Adrenal gland (tissue), 19 donors: ENCODE measurements at regions of chr11 and their contacts with region 1.

Region 1: DNA sequence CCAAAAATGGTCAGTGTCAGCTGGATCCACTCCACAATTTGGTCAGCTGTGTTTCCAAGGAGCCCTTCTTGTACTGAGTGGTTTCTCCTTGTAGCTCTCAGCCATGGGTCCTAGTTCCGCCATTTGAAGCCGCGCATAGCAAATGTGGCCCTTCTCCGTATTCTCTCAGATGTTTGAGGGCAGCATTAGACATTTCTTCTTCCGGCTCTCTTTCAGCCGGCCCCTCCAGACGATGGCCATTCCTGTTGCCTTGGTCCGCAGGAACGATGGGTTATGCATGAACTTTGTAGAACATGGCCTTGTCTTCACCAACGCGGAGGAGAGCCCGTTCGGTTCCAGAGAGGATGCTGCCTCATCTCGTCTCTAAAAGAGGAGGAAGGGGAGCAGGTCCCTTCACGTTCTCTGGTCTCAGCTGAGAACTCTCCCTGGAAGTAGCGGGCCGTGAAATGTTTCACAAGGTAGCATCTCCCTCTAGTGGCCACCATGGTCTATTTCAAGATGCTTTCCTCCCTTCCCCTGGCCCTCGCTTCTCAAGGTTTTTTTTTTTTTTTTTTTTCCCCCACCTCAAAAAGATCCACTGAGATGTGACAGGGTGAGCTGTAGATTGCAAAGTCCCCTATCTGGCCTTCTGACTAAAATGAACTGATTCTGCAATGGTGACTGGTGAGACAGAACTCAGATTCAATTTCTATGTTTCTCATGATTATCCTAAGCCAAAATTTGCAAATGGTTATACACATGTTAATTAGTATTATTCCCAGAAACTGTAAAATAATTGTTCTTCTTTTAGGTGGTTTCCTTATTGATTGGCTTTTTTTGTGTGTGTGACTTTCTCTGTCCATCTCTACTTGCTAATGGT is 19.8 kb upstream of the PLET1 start:
- DNase-seq: peak; percentile 74 to 88 (median 82)
- H3K4me3 ChIP-seq: peak overlapping the region in 2 of 4 donors; percentile 22 to 48
- H3K27ac ChIP-seq: peak overlapping the region in 1 of 5 donors; percentile 48
- H3K4me1 ChIP-seq: peaks cover 0 to 3% of the 10 kb centered on the region in 2 donors
- H3K27me3 ChIP-seq: no peaks in the 10 kb centered on the region
- CTCF ChIP-seq: peak; percentile 58 to 91 (median 82)
- POLR2A ChIP-seq: no peak

Region 2: GRCh38 chr11:111911563-111912401 is 368.7 kb before region 1 on chr11 and contains the start of gene CRYAB:
- intact Hi-C with region 1: no loop called
- DNase-seq: peak; percentile 82 to 94 (median 92)
- H3K4me3 ChIP-seq: peak within 1 kb of the TSS in 2 of 4 donors; percentile 13 to 53
- H3K27ac ChIP-seq: peak within 1 kb of the TSS; percentile 51 to 87 (median 61)
- H3K4me1 ChIP-seq: peaks cover 17 to 30% of the 10 kb centered on the region in 2 donors
- H3K27me3 ChIP-seq: no peaks in the 10 kb centered on the region
- CTCF ChIP-seq: no peak
- POLR2A ChIP-seq: peak; percentile 13 to 71
- total RNA-seq, gene CRYAB: 6.8 to 87.7 (median 52.3) TPM

Region 3: GRCh38 chr11:112113539-112114457 is 166.7 kb before region 1 on chr11:
- intact Hi-C with region 1: loop called (anchors 5 to 10 kb)
- DNase-seq: no peak
- H3K4me3 ChIP-seq: no peak overlapping the region
- H3K27ac ChIP-seq: no peak overlapping the region
- H3K4me1 ChIP-seq: no peaks in the 10 kb centered on the region
- H3K27me3 ChIP-seq: no peaks in the 10 kb centered on the region
- CTCF ChIP-seq: peak; percentile 48 to 74 (median 67)
- POLR2A ChIP-seq: no peak

Region 4: GRCh38 chr11:112219476-112220232 is 60.8 kb before region 1 on chr11:
- intact Hi-C with region 1: loop called (anchors 2 to 5 kb)
- DNase-seq: peak; percentile 31 to 74 (median 53)
- H3K4me3 ChIP-seq: no peak overlapping the region
- H3K27ac ChIP-seq: no peak overlapping the region
- H3K4me1 ChIP-seq: no peaks in the 10 kb centered on the region
- H3K27me3 ChIP-seq: no peaks in the 10 kb centered on the region
- CTCF ChIP-seq: peak; percentile 76 to 94 (median 90)
- POLR2A ChIP-seq: no peak

Region 5: GRCh38 chr11:112410325-112410724 is 129.8 kb after region 1 on chr11:
- intact Hi-C with region 1: no loop called
- DNase-seq: no peak
- H3K4me3 ChIP-seq: no peak overlapping the region
- H3K27ac ChIP-seq: no peak overlapping the region
- H3K4me1 ChIP-seq: no peaks in the 10 kb centered on the region
- H3K27me3 ChIP-seq: no peaks in the 10 kb centered on the region
- CTCF ChIP-seq: no peak
- POLR2A ChIP-seq: no peak

Region 6: DNA sequence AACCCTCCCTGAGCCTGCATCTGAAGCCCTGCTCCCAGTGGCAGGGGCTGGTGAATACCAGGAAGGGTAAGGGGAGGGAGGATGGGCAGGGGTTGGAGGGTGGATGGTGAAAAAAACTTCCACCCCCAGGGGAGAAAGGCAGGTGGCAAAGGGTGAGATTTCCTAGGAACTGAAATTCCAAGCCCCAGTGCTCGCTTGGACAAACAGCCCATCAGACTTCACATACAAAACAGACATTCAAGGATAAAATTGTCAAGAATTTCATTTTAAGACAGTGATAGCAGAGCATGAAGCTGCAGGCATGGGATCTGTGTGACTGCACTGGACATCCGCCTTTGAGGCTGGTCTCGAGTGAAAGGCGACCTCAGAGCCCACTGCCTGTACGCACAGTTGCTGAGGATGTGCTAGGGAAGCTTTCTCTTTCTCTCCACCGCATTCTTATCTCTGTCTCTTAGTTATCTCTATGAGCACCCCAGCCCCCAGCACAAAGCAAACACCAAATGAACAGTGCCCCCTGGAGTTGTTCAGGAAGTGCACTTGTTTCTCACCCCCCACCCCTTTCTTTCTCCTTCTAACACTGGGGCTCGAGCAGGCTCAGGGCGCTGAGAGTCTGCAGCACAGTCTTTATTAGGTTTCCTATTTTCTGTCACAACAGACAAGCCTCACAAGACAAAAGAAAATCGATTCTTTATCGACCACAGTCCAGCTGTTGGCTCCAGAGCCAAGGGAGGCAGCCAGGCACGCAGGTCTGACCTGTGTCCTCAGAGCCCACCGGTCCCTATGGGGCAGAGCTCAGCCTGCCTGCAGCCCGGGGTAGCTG is 443.4 kb after region 1 on chr11:
- intact Hi-C with region 1: no loop called
- DNase-seq: no peak
- H3K4me3 ChIP-seq: no peak overlapping the region
- H3K27ac ChIP-seq: no peak overlapping the region
- H3K4me1 ChIP-seq: no peaks in the 10 kb centered on the region
- H3K27me3 ChIP-seq: no peaks in the 10 kb centered on the region
- CTCF ChIP-seq: no peak
- POLR2A ChIP-seq: no peak

Region 7: GRCh38 chr11:113289431-113290187 is 1009.1 kb after region 1 on chr11:
- intact Hi-C with region 1: loop called (anchors 10 kb)
- DNase-seq: peak; percentile 48 to 84 (median 72)
- H3K4me3 ChIP-seq: no peak overlapping the region
- H3K27ac ChIP-seq: no peak overlapping the region
- H3K4me1 ChIP-seq: no peaks in the 10 kb centered on the region
- H3K27me3 ChIP-seq: no peaks in the 10 kb centered on the region
- CTCF ChIP-seq: peak; percentile 87 to 97 (median 94)
- POLR2A ChIP-seq: no peak